Naive thymus-derived CD4-positive, alpha-beta T cell (primary cell): ENCODE measurements at regions of chr15 and their contacts with region 1.

Region 1: DNA sequence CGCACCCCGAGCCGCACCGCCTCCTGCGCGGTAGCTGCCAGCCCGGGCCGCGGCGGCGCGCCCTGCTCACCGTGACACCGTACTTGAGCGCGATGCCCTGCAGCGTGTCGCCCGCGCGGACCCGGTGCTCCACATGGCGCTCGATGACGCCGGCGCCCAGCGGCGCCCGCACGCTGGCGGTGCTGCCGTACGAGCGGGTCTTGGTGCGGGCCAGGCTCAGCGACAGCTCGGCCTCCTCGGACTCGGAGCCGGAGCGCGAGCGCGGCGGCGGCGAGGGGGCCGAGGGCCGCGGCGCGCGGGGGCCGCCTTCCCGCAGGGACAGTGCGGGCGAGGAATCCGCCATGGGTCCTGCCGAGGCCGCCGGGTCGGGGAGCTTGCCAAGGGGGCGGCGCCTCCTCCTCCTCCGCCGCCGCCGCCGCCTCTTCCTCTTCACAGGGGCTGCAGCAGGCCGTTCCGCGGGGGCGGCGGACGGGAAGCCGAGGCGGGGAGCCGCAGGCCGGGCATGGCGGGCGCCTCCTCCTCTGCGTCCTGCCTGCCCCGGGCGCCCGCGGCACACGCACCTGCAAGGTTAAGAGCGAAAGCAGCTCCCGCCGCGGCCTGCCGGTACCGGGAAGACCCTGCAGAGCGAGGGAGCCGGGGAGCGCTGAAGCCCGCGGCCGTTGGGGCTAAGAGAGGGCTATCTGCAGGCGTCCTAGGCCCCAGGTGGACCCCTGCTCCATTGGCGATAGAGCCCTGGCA is at the start of gene LYSMD2:
- DNase-seq: peak; percentile 56 to 78 (median 66)
- ATAC-seq: peak; percentile 73
- H3K4me3 ChIP-seq: peak within 1 kb of the TSS; percentile 71
- H3K4me3 Mint-ChIP-seq: peak within 1 kb of the TSS; percentile 87 to 96 (median 94)
- H3K27ac ChIP-seq: peak within 1 kb of the TSS; percentile 84
- H3K27ac Mint-ChIP-seq: peak within 1 kb of the TSS; percentile 86 to 98 (median 96)
- H3K4me1 ChIP-seq: peaks cover 28 to 34% of the 10 kb centered on the region in 2 donors
- H3K4me1 Mint-ChIP-seq: peaks cover 47 to 71% (median 63%) of the 10 kb centered on the region in 7 donors
- H3K27me3 ChIP-seq: no peaks in the 10 kb centered on the region
- H3K27me3 Mint-ChIP-seq: no peaks in the 10 kb centered on the region
- total RNA-seq, gene LYSMD2: 12.5 to 33.8 (median 17.8) TPM

Region 2: DNA sequence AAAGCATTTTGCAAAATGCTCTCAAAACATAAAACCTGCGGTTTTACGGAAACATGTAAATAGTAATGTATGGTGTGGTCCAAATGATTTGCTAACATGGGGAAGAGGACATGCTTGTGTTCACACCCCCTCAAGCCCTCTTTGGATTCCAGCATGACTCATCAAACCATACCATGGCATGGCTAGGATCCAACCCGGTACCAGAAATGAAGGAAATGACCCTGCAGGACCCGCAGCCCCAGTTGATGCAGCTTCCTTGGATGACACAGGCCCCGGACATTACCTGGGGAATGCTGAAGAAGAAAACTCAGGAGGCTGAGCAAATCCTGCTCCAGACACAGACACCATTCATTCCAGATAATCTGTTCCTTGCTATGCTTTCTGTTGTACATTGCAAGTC is 1893.7 kb before region 1 on chr15:
- CTCF ChIA-PET with region 1: no interaction called
- POLR2A ChIA-PET with region 1: no interaction called
- intact Hi-C with region 1: no loop called
- DNase-seq: no peak
- ATAC-seq: no peak
- H3K4me3 ChIP-seq: no peak overlapping the region
- H3K4me3 Mint-ChIP-seq: no peak overlapping the region
- H3K27ac ChIP-seq: no peak overlapping the region
- H3K27ac Mint-ChIP-seq: no peak overlapping the region
- H3K4me1 ChIP-seq: no peaks in the 10 kb centered on the region
- H3K4me1 Mint-ChIP-seq: peaks cover 0 to 2% (median 0%) of the 10 kb centered on the region in 7 donors
- H3K27me3 ChIP-seq: no peaks in the 10 kb centered on the region
- H3K27me3 Mint-ChIP-seq: peaks cover 0 to 30% (median 6%) of the 10 kb centered on the region in 5 donors

Region 3: GRCh38 chr15:50424066-50424890 is 1313.2 kb before region 1 on chr15 and contains the start of gene USP8:
- CTCF ChIA-PET with region 1: no interaction called
- POLR2A ChIA-PET with region 1: no interaction called
- intact Hi-C with region 1: loop called in 1 of 2 experiments (anchors 5 kb)
- DNase-seq: peak; percentile 88 to 95 (median 93)
- ATAC-seq: peak; percentile 98
- H3K4me3 ChIP-seq: peak within 1 kb of the TSS; percentile 91
- H3K4me3 Mint-ChIP-seq: peak within 1 kb of the TSS; percentile 86 to 100 (median 98)
- H3K27ac ChIP-seq: peak within 1 kb of the TSS; percentile 93
- H3K27ac Mint-ChIP-seq: peak within 1 kb of the TSS; percentile 91 to 99 (median 97)
- H3K4me1 ChIP-seq: peaks cover 8 to 20% of the 10 kb centered on the region in 2 donors
- H3K4me1 Mint-ChIP-seq: peaks cover 23 to 59% (median 34%) of the 10 kb centered on the region in 7 donors
- H3K27me3 ChIP-seq: no peaks in the 10 kb centered on the region
- H3K27me3 Mint-ChIP-seq: no peaks in the 10 kb centered on the region
- total RNA-seq, gene USP8: 52.8 to 61.8 (median 57.1) TPM

Region 4: DNA sequence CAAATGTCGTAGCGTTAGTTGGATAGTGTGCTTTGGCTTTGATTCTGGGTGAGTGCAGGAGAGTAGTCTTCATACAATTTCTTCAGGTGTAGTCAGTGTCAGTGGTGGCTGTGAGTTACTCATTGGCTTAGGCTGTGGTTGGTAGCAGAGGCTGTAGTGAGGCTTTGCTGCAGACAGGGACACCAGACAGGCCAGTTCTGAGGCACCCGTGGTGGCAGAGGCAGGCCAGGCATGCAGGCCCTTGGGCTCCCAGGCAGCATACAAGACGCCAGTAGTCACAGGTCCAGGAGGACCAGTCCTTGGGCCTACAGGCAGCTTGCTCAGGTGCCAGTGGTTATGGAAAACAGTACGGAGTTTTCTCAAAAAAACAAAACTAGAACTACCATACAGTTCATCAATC is 176.2 kb before region 1 on chr15:
- CTCF ChIA-PET with region 1: no interaction called
- POLR2A ChIA-PET with region 1: no interaction called
- intact Hi-C with region 1: no loop called
- DNase-seq: no peak
- ATAC-seq: no peak
- H3K4me3 ChIP-seq: no peak overlapping the region
- H3K4me3 Mint-ChIP-seq: no peak overlapping the region
- H3K27ac ChIP-seq: no peak overlapping the region
- H3K27ac Mint-ChIP-seq: no peak overlapping the region
- H3K4me1 ChIP-seq: no peaks in the 10 kb centered on the region
- H3K4me1 Mint-ChIP-seq: peaks cover 0 to 1% (median 0%) of the 10 kb centered on the region in 7 donors
- H3K27me3 ChIP-seq: no peaks in the 10 kb centered on the region
- H3K27me3 Mint-ChIP-seq: peaks cover 0 to 4% (median 0%) of the 10 kb centered on the region in 5 donors

Region 5: GRCh38 chr15:51681303-51681963 is 56.0 kb before region 1 on chr15 and contains the start of gene SCG3:
- CTCF ChIA-PET with region 1: no interaction called
- POLR2A ChIA-PET with region 1: interaction called, 7 read pairs
- intact Hi-C with region 1: loop called in 1 of 2 experiments (anchors 5 kb)
- DNase-seq: peak; percentile 18 to 68 (median 42)
- ATAC-seq: peak; percentile 79
- H3K4me3 ChIP-seq: no peak within 1 kb of the TSS
- H3K4me3 Mint-ChIP-seq: peak within 1 kb of the TSS in 2 of 10 donors; percentile 17 to 49
- H3K27ac ChIP-seq: no peak within 1 kb of the TSS
- H3K27ac Mint-ChIP-seq: peak within 1 kb of the TSS in 3 of 9 donors; percentile 15 to 53 (median 51)
- H3K4me1 ChIP-seq: no peaks in the 10 kb centered on the region
- H3K4me1 Mint-ChIP-seq: peaks cover 0 to 7% (median 0%) of the 10 kb centered on the region in 7 donors
- H3K27me3 ChIP-seq: no peaks in the 10 kb centered on the region
- H3K27me3 Mint-ChIP-seq: peaks cover 47 to 66% (median 54%) of the 10 kb centered on the region in 5 donors
- total RNA-seq, gene SCG3: not detected

Region 6: DNA sequence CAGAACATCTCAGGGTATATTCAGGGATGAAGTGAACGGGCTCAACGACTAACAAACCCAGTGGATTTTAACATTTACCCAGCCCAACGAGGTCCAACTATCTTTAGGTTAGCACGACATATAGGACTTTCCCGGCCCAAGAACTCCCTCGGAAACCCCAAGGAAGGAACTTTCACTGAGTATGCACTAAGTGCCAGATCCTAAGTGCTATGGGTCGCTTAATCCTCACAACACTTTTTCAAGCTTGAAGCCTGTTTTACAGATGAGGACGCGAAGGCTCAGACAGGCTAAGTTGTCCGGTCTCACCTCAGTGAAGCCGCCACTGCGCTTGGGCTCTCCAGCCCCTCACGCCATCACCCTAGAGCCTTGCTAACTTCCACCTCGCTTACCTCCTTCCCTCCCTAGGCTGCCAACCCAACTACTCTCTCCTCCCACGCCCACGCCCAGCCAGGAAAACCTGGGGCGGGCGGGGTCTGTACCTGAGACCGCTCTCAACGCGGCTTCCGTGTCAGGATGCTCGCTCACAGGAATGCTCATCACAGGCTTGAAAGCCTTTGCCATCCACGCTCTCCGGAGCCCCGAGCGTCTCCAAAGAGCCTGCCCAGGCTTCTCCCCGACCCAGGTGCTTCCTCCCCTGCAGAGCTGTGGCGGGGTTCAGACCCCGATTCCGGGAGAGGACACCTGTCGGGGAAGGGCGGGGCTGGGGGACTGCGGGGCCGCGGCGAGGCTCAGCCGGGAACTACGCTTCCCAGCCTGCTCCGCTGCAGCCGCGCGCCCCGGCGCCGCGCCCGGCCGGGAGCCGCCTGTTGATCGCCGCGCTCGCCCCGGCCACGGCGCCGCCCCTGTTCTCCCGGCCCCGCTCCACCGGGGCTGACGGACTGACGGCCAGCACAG is 13.6 kb after region 1 on chr15 and contains the start of gene TMOD2:
- CTCF ChIA-PET with region 1: interaction called, 7 read pairs
- POLR2A ChIA-PET with region 1: interaction called, 44 read pairs
- intact Hi-C with region 1: loop called (anchors 1 to 2 kb)
- DNase-seq: peak in 8 of 9 donors; percentile 40 to 66 (median 46)
- ATAC-seq: peak; percentile 90
- H3K4me3 ChIP-seq: peak within 1 kb of the TSS; percentile 55
- H3K4me3 Mint-ChIP-seq: peak within 1 kb of the TSS; percentile 84 to 91 (median 87)
- H3K27ac ChIP-seq: no peak within 1 kb of the TSS
- H3K27ac Mint-ChIP-seq: peak within 1 kb of the TSS in 7 of 9 donors; percentile 32 to 84 (median 80)
- H3K4me1 ChIP-seq: peaks cover 0 to 10% of the 10 kb centered on the region in 2 donors
- H3K4me1 Mint-ChIP-seq: peaks cover 24 to 51% (median 42%) of the 10 kb centered on the region in 7 donors
- H3K27me3 ChIP-seq: no peaks in the 10 kb centered on the region
- H3K27me3 Mint-ChIP-seq: peaks cover 0 to 60% (median 4%) of the 10 kb centered on the region in 5 donors
- total RNA-seq, gene TMOD2: 9.5 to 17.1 (median 13.4) TPM

Region 7: DNA sequence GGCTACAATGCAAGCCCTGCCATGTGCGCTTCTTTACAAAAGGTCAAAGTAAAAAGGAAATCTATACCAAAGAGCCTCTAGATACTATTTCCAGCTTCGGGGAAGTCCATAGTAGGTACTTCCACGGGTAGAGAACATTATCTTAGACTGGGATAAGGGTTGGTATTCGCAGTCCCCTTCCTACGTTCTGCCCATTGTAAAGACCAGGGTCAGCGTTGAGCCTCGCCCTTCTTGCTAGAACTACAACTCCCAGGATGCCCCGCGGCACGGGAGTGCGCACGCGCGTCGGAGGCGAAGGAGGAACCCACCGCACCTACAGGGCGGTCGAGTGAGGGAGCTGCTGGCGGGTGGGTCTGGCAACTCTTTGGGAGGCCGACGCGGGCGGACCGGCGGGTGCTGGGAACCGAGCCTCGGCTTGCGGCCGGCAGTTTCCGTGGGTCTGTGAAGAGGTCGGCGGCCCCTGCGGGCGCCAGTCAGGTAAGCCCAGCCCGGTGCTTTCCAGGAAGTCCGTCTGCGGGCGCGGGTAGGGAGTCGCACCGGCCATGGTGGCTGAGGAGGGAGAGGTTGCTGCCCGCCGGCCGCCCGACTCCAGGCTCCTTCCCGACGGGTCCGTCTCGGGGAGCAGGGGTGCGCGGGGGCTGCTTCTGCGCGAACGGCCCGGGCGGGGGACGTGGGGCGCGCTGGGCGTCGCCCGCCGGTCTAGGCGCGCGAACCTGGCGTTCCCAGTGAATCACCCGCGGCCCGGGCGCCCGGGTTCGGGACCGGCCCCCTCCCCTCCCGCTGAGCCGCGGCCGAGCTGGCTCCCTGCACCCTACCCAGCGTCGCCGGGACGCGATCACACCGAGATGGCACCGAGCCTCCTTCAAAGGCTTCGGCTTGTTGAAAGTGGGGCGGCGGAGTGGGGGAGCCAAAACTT is 92.2 kb after region 1 on chr15 and contains the start of gene TMOD3:
- CTCF ChIA-PET with region 1: no interaction called
- POLR2A ChIA-PET with region 1: interaction called, 3 read pairs
- intact Hi-C with region 1: loop called (anchors 5 kb)
- DNase-seq: peak; percentile 79 to 94 (median 84)
- ATAC-seq: peak; percentile 94
- H3K4me3 ChIP-seq: peak within 1 kb of the TSS; percentile 93
- H3K4me3 Mint-ChIP-seq: peak within 1 kb of the TSS; percentile 94 to 99 (median 98)
- H3K27ac ChIP-seq: peak within 1 kb of the TSS; percentile 85
- H3K27ac Mint-ChIP-seq: peak within 1 kb of the TSS; percentile 87 to 97 (median 94)
- H3K4me1 ChIP-seq: peaks cover 21 to 26% of the 10 kb centered on the region in 2 donors
- H3K4me1 Mint-ChIP-seq: peaks cover 30 to 51% (median 41%) of the 10 kb centered on the region in 7 donors
- H3K27me3 ChIP-seq: no peaks in the 10 kb centered on the region
- H3K27me3 Mint-ChIP-seq: peaks cover 0 to 8% (median 0%) of the 10 kb centered on the region in 5 donors
- total RNA-seq, gene TMOD3: 46.5 to 75.9 (median 50.4) TPM

Region 8: DNA sequence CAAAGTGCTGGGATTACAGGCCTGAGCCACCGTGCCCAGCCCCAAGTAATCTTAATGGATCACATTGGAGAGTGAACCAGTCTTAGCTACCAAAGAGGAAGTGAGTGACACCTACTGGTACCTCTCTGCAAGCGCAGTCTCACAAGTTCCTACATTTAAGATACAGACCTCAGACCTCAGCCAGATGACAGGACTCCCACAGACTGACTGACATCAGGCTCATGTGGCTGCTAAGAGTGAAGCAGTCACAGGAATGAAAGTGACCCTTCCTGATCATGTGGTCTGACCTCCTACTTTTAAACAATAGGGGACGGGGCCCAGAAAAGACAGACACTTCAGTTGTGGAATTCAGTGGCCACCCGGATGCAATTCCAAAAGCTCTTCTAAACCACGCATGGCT is 490.0 kb after region 1 on chr15:
- CTCF ChIA-PET with region 1: no interaction called
- POLR2A ChIA-PET with region 1: no interaction called
- intact Hi-C with region 1: loop called in 1 of 2 experiments (anchors 5 kb)
- DNase-seq: peak in 8 of 9 donors; percentile 51 to 74 (median 65)
- ATAC-seq: peak; percentile 98
- H3K4me3 ChIP-seq: no peak overlapping the region
- H3K4me3 Mint-ChIP-seq: no peak overlapping the region
- H3K27ac ChIP-seq: no peak overlapping the region
- H3K27ac Mint-ChIP-seq: peak overlapping the region in 2 of 9 donors; percentile 19 to 56
- H3K4me1 ChIP-seq: peaks cover 0 to under 1% of the 10 kb centered on the region in 2 donors
- H3K4me1 Mint-ChIP-seq: peaks cover 10 to 26% (median 19%) of the 10 kb centered on the region in 7 donors
- H3K27me3 ChIP-seq: no peaks in the 10 kb centered on the region
- H3K27me3 Mint-ChIP-seq: no peaks in the 10 kb centered on the region